ENCODE measurements at regions of chr22 and their contacts with region 1.

Region 1: GRCh38 chr22:30890686-30891442 is 77.7 kb downstream of the MORC2 start:
- DNase-seq: peak; percentile 57
- H3K4me3 Mint-ChIP-seq: no peak overlapping the region
- H3K27ac Mint-ChIP-seq: no peak overlapping the region
- H3K4me1 Mint-ChIP-seq: no peaks in the 10 kb centered on the region
- H3K27me3 Mint-ChIP-seq: no peaks in the 10 kb centered on the region
- CTCF ChIP-seq: peak; percentile 76

Region 2: GRCh38 chr22:30763815-30764686 is 126.8 kb before region 1 on chr22:
- CTCF ChIA-PET with region 1: interaction called, 20 read pairs
- POLR2A ChIA-PET with region 1: interaction called, 4 read pairs
- intact Hi-C with region 1: no loop called
- DNase-seq: peak; percentile 91
- H3K4me3 Mint-ChIP-seq: no peak overlapping the region
- H3K27ac Mint-ChIP-seq: peak overlapping the region; percentile 10
- H3K4me1 Mint-ChIP-seq: peaks cover 10% of the 10 kb centered on the region
- H3K27me3 Mint-ChIP-seq: no peaks in the 10 kb centered on the region
- CTCF ChIP-seq: peak; percentile 71

Region 3: DNA sequence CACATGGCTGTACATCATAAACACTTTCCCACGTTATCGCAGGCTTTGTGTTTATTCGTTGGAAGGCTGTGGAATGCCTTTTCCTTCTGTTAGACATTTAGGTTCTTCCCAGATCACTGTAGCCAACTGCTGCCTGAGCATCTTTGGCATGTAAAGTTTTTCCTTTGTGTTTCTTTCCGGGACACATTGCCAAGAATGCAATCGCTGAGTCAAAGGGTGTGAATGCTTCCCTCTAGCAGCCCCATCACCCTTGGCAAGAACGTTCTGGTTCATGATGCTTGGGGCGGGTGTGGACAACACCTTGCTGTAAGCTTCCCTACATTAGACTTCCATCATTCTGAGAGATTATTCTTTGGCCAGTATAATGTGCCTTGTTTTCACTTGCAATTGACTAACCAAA is 60.0 kb before region 1 on chr22:
- CTCF ChIA-PET with region 1: interaction called, 4 read pairs
- POLR2A ChIA-PET with region 1: no interaction called
- intact Hi-C with region 1: loop called (anchors 2 kb)
- DNase-seq: peak; percentile 99
- H3K4me3 Mint-ChIP-seq: peak overlapping the region; percentile 67
- H3K27ac Mint-ChIP-seq: peak overlapping the region; percentile 98
- H3K4me1 Mint-ChIP-seq: peaks cover 60% of the 10 kb centered on the region
- H3K27me3 Mint-ChIP-seq: no peaks in the 10 kb centered on the region
- CTCF ChIP-seq: no peak

Region 4: GRCh38 chr22:30905696-30906341 is 15.0 kb after region 1 on chr22:
- CTCF ChIA-PET with region 1: interaction called, 16 read pairs
- POLR2A ChIA-PET with region 1: no interaction called
- intact Hi-C with region 1: no loop called
- DNase-seq: no peak
- H3K4me3 Mint-ChIP-seq: no peak overlapping the region
- H3K27ac Mint-ChIP-seq: no peak overlapping the region
- H3K4me1 Mint-ChIP-seq: no peaks in the 10 kb centered on the region
- H3K27me3 Mint-ChIP-seq: no peaks in the 10 kb centered on the region
- CTCF ChIP-seq: no peak

Region 5: GRCh38 chr22:31248138-31248745 is 357.4 kb after region 1 on chr22:
- CTCF ChIA-PET with region 1: no interaction called
- POLR2A ChIA-PET with region 1: no interaction called
- intact Hi-C with region 1: no loop called
- DNase-seq: peak; percentile 95
- H3K4me3 Mint-ChIP-seq: peak overlapping the region; percentile 85
- H3K27ac Mint-ChIP-seq: peak overlapping the region; percentile 97
- H3K4me1 Mint-ChIP-seq: peaks cover 19% of the 10 kb centered on the region
- H3K27me3 Mint-ChIP-seq: no peaks in the 10 kb centered on the region
- CTCF ChIP-seq: no peak